ENCODE measurements at regions of chr15 and their contacts with region 1.

Region 1: GRCh38 chr15:52528991-52529926 is 579 bp upstream of the MYO5A start:
- DNase-seq: peak; percentile 86
- ATAC-seq: peak; percentile 89

Region 2: GRCh38 chr15:52256366-52256765 is 272.9 kb before region 1 on chr15:
- intact Hi-C with region 1: loop called (anchors 5 kb)
- DNase-seq: no peak
- ATAC-seq: peak; percentile 50

Region 3: DNA sequence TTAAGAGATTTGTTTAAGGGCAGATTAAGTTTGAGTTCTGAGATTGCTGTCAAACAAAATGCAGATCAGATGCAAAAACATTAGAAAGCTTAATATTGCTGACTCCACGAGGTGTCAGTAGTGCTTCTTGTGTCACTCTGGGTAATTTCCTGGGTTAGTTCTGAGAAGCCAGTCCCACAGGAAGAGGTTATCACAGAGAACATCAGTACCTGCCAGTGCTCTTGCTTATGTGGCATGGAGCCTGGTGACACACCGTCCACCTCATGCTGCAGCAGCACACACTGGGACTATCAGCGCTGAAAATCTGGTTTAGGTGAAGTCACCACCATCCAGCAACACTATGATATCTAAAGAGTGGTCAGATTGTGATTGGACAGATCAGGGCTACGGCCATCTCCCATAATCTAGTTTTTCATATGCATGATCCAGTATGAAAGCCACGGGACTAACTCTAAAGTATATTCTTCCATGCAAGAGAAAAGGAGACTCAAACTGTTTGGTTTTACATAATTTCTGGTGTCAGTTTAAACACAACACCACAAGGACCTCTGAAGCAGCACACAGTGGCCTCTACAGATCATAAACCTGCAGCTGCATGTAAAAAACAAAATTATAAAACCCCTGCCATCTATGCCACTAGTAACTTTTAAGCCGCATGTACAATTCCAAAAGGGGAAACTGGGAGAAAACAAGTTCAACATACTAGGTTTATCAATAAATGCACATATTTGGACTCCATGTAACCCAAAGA is 197.6 kb before region 1 on chr15:
- intact Hi-C with region 1: loop called (anchors 5 kb)
- DNase-seq: no peak
- ATAC-seq: peak; percentile 59

Region 4: GRCh38 chr15:52417521-52417920 is 111.7 kb before region 1 on chr15:
- intact Hi-C with region 1: loop called (anchors 10 kb)
- DNase-seq: no peak
- ATAC-seq: no peak

Region 5: GRCh38 chr15:52568601-52569256 is 39.5 kb after region 1 on chr15 and contains the start of gene ARPP19:
- intact Hi-C with region 1: loop called (anchors 5 kb)
- DNase-seq: peak; percentile 93
- ATAC-seq: peak; percentile 93
- total RNA-seq, gene ARPP19: 155 TPM

Region 6: DNA sequence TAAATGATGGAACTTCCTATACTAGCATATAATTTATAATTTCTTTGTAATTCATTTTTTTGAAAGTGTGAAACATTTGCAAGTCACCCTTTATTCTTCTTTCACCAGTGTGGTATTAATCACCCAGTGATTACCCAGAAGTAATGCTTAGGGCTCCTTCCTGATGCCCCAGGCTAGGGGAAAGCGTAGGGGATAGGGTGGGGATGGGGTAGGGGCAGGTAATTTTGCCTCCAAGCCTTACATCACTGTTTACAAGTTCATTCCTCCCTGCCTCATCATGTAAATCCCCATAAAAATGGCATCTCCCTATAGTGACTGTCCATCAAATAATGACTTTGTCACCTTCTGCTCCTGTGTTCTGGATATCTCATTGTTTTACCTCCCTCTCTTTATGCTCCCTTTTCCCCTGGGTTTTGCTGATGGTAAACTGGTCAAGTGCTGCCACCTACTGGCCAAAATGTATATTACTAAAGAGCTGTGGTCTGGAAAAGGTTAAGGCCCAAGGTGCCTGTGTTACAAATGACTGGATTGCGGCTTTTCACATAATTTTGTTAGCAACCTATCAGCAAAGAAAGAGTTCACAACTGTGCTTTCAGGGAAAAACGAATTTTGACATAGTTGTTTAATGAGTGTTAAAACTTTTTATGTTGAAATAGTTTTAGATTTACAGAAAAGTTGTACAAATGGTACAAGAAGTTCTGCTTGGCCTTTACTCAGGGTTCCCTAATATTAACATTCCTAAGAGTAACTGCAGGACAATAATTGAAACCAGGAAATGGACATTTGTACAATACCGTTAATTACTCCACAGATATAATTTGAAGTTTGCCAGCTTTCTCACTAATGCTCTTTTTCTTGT is 206.2 kb after region 1 on chr15:
- intact Hi-C with region 1: loop called (anchors 10 kb)
- DNase-seq: no peak
- ATAC-seq: peak; percentile 78

Measured in Right ventricle myocardium inferior (tissue), 1 donor.